Activated T-helper 2 cell treated with anti-CD3 and anti-CD28 coated beads, Interferon-gamma antibody, Interleukin-2, Interleukin-4, amounts not matched to agents 10 μg/mL and 5 μg/mL and 100 μg/mL, durations not matched to agents 14 hours and 24 hours and 36 hours (primary cell): ENCODE measurements at regions of chr7 and their contacts with region 1.

Region 1: DNA sequence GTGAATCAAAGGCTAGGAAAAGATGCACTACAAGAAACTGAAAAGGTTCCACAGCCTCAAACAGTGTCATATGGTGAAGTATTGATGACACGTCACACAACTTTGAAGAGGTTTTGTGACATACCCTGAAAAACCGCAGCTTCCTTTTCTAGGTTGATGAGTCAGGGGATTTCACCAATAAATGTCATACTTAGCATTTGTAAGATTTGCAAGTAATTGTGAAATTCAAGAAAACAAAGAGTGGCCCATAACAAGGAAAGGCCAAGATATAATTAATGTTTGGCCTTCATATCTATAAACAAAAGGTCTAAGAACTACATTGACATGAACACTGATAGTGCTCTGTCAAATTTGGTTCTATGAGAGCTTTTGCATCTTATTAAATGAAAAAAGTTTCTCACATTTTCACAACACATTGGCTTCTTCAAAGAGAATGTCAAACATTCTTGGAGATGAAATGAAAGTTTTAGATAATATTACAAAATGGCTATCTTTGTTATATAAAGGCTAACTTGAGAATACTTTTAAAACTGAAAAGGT is 62.0 kb upstream of the NAMPT start:
- DNase-seq: peak; percentile 62
- H3K4me3 Mint-ChIP-seq: no peak overlapping the region
- H3K27ac Mint-ChIP-seq: peak overlapping the region; percentile 100
- H3K4me1 Mint-ChIP-seq: peaks cover 51% of the 10 kb centered on the region
- H3K27me3 Mint-ChIP-seq: no peaks in the 10 kb centered on the region

Region 2: GRCh38 chr7:104956753-104957450 is 1389.8 kb before region 1 on chr7:
- intact Hi-C with region 1: loop called (anchors 5 kb)
- DNase-seq: peak; percentile 48
- H3K4me3 Mint-ChIP-seq: peak overlapping the region; percentile 65
- H3K27ac Mint-ChIP-seq: peak overlapping the region; percentile 100
- H3K4me1 Mint-ChIP-seq: peaks cover 59% of the 10 kb centered on the region
- H3K27me3 Mint-ChIP-seq: no peaks in the 10 kb centered on the region

Region 3: DNA sequence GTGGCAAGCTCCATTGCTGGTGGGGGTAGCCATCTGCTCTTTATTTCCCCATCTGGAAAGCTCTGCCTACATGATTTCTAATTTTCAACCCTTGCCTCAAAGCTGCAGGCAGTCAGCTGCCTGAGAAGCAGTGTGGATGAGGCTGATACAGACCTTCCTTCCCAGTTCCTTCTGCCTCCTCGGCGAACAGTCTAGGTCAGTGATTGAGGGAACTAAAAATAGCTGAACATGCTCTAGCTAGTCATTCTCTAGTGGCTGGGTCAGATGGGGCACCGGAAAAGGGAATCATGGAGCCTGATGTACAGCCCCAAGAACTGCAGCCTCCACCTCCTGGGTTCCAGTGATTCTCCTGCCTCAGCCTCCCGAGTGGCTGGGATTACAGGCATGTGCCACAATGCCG is 110.7 kb before region 1 on chr7:
- intact Hi-C with region 1: no loop called
- DNase-seq: no peak
- H3K4me3 Mint-ChIP-seq: no peak overlapping the region
- H3K27ac Mint-ChIP-seq: no peak overlapping the region
- H3K4me1 Mint-ChIP-seq: no peaks in the 10 kb centered on the region
- H3K27me3 Mint-ChIP-seq: peaks cover 15% of the 10 kb centered on the region

Region 4: DNA sequence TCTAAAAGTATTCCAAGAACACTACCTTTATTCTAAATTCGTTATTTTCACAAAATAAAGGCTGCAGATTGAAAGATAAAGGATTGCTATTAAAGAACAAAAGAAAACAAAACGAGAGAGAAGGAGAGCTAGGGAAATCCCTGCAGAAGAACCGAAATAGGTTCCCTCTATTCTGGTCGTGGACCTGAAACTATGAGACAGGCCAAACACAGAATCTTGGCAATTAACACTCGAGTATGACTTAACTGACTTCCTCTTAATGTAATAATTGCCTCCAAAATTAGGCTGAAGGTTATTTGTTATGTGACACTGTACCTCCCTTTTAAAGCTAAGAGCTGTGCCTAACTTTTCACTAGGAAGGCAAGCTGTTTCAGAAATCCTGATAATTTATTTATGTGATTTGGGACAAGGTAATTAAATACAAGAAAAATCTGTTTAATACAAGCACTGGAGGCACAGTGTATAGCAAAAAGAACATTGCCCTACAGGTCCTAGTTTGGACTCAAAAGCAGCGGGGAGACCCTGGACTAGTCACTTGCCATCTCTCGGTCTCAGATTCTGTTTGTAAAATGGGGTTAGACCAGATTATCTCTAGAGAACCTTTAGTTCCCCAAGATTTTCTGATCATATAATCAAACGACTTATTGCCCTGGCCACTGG is 73.6 kb before region 1 on chr7:
- intact Hi-C with region 1: no loop called
- DNase-seq: no peak
- H3K4me3 Mint-ChIP-seq: no peak overlapping the region
- H3K27ac Mint-ChIP-seq: peak overlapping the region; percentile 60
- H3K4me1 Mint-ChIP-seq: peaks cover 32% of the 10 kb centered on the region
- H3K27me3 Mint-ChIP-seq: no peaks in the 10 kb centered on the region

Region 5: GRCh38 chr7:106329971-106330733 is 16.6 kb before region 1 on chr7:
- intact Hi-C with region 1: loop called (anchors 2 kb)
- DNase-seq: no peak
- H3K4me3 Mint-ChIP-seq: no peak overlapping the region
- H3K27ac Mint-ChIP-seq: peak overlapping the region; percentile 59
- H3K4me1 Mint-ChIP-seq: peaks cover 21% of the 10 kb centered on the region
- H3K27me3 Mint-ChIP-seq: no peaks in the 10 kb centered on the region

Region 6: DNA sequence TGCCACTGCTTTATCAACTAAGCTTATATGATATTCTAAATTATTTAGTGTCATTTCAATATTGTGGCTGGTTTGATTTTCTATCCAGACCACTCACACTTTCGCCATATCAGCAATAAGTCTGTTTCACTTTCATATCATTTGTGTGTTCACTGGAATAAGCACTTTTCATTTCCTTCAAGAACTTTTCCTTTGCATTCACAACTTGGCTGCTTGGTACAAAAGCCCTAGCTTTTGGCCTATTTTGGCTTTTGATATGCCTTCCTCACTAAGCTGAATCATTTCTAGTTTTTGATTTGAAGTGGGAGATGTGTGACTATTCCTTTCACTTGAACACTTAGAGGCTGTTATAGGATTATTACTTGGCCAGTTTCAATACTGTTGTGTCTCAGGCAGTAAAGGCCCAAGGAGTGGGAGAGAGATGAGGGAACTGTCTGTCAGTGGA is 59.0 kb after region 1 on chr7:
- intact Hi-C with region 1: loop called (anchors 1 kb)
- DNase-seq: no peak
- H3K4me3 Mint-ChIP-seq: no peak overlapping the region
- H3K27ac Mint-ChIP-seq: peak overlapping the region; percentile 67
- H3K4me1 Mint-ChIP-seq: peaks cover 28% of the 10 kb centered on the region
- H3K27me3 Mint-ChIP-seq: peaks cover 4% of the 10 kb centered on the region

Region 7: DNA sequence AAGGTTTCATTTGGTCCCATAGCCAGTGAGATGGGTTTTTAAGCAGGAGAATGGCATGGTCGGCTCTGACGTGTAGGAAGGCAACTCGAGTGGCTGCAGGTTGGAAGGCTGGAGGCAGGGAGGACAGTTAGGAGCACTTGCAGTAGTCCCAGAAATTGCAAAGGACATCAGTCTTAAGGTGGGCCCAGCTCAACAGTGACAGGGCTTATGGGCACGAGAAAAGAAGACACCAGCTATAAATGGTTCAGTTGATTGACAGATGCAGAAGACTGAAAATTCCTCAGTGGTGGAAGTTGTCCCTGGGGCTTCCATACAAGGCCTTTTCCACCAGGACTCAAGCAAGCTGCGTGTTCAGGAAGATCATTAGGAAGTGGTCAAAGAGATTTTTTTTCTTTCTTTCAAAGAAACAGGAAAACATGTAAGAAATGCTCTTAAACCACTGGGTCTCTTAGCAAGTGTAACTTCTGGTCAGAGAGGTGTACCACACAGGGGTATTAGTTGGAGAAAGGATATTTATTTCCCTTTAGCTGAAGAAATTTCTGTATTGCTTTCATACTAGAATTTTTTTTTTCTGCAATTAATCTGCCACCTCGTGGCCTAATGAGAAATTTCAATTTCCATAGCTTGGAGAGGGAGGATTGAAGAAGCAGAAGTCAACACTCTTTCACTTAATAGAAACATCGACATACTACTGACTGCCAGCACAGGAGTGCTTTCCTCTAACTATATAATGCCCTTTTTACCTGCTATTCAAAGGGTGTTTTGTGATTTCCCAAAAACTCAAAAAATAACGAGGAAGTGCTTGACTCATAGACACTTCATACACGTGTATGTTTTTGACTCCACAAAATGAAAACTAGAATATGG is 115.5 kb after region 1 on chr7:
- intact Hi-C with region 1: loop called (anchors 1 kb)
- DNase-seq: no peak
- H3K4me3 Mint-ChIP-seq: no peak overlapping the region
- H3K27ac Mint-ChIP-seq: no peak overlapping the region
- H3K4me1 Mint-ChIP-seq: peaks cover 16% of the 10 kb centered on the region
- H3K27me3 Mint-ChIP-seq: no peaks in the 10 kb centered on the region

Region 8: DNA sequence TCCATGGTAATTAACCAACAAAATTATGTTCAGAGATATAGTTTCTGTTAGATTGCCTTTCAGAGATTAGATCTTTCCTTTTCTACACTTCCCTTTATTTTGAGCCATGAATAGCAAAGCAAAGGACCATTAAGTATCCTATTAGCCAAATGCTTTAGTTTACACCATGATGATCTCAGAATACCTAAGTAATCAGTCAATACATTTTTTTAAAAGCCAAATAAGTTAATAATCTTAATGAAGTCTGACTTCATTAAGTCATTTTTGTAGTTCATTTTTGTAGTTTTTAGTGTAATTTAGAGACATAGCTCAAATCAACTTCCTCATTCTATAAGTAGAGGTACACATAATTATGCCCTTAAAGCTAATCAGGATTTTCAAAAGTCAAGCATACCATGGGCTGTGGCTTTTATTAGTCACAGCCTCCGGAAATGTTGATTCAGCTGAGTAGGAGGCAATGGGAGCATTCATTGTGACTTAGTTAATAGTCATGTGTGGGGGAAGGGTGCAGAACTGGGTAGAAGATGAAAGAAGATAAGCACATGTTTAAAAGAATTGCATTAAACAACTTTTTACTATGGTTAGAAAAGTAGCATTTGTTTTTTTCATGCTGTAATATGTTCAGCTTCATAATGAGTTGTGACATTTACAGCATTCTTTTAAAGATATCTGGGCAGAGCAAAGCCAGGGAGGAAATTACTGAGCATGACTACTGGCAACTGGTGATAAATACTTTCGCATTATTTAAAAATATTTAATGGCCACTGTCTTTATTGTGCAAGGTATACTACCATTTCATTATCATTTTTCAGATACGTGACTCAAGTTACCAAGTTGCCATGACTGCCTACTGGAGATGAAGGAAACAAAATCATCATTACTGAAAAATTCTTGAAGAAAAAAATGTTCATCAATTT is 371.5 kb after region 1 on chr7:
- intact Hi-C with region 1: loop called (anchors 2 kb)
- DNase-seq: peak; percentile 56
- H3K4me3 Mint-ChIP-seq: no peak overlapping the region
- H3K27ac Mint-ChIP-seq: no peak overlapping the region
- H3K4me1 Mint-ChIP-seq: peaks cover 30% of the 10 kb centered on the region
- H3K27me3 Mint-ChIP-seq: no peaks in the 10 kb centered on the region

Region 9: DNA sequence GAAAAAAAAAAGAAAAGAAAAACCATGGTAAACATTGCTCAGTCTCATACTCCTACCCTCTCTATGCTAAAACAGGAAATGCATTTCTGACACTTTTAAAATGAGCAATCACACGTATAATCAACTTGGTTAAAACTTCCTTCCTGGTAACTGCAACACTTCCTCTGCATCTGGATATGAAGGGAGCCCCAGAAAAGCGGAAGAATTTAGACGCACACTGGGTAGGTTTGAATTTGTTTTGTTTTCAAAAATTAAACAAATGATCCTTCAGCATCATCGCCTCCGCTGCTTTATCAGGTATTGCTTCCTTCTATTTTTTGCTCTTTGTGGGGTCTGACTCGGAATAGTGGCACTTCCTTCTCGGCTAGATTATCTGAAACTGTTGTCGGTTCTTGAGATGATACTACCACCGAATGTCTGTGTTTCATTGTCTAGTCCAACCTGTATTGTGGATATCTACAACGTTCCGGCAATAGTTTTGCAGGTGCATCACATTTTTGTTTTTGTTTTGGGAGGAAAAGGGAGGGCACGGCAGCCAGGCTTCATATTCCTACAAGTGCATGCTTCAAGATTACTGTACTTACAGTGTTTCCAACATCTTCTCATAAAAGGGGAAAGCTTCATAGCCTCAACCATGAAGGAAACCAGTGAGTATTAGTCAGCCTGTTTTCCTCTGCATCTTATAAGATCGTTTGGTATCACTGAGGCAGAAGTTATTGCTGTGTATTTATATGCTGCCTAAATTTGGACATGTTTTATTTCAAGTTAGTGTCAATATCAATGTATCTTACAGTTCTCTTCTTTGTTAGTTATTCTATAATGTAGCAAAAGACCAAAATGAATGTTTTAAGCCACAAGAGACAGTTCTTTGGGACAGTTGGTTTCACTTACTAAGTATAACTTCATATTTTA is 518.6 kb after region 1 on chr7 and contains the start of gene PIK3CG:
- intact Hi-C with region 1: loop called (anchors 2 kb)
- DNase-seq: peak; percentile 16
- H3K4me3 Mint-ChIP-seq: peak within 1 kb of the TSS; percentile 91
- H3K27ac Mint-ChIP-seq: peak within 1 kb of the TSS; percentile 85
- H3K4me1 Mint-ChIP-seq: peaks cover 41% of the 10 kb centered on the region
- H3K27me3 Mint-ChIP-seq: no peaks in the 10 kb centered on the region
- total RNA-seq, gene PIK3CG: 36.6 and 36.7 TPM in 2 replicates